ENCODE measurements at regions of chr2 and their contacts with region 1.

Region 1: GRCh38 chr2:28392297-28393113 is at the start of gene FOSL2:
- DNase-seq: peak; percentile 96
- ATAC-seq: peak; percentile 82
- H3K4me3 Mint-ChIP-seq: peak within 1 kb of the TSS; percentile 81
- H3K27ac Mint-ChIP-seq: peak within 1 kb of the TSS; percentile 96
- H3K4me1 Mint-ChIP-seq: peaks cover 24% of the 10 kb centered on the region
- H3K27me3 Mint-ChIP-seq: no peaks in the 10 kb centered on the region
- total RNA-seq, gene FOSL2: 37.3 to 40.9 TPM

Region 2: GRCh38 chr2:28108143-28108542 is 284.4 kb before region 1 on chr2:
- CTCF ChIA-PET with region 1: no interaction called
- POLR2A ChIA-PET with region 1: no interaction called
- DNase-seq: no peak
- ATAC-seq: no peak
- H3K4me3 Mint-ChIP-seq: no peak overlapping the region
- H3K27ac Mint-ChIP-seq: no peak overlapping the region
- H3K4me1 Mint-ChIP-seq: peaks cover 8% of the 10 kb centered on the region
- H3K27me3 Mint-ChIP-seq: no peaks in the 10 kb centered on the region

Region 3: GRCh38 chr2:28377984-28378678 is 14.4 kb before region 1 on chr2:
- CTCF ChIA-PET with region 1: interaction called, 16 read pairs
- POLR2A ChIA-PET with region 1: interaction called, 8 read pairs
- DNase-seq: no peak
- ATAC-seq: peak; percentile 17
- H3K4me3 Mint-ChIP-seq: no peak overlapping the region
- H3K27ac Mint-ChIP-seq: peak overlapping the region; percentile 37
- H3K4me1 Mint-ChIP-seq: peaks cover 47% of the 10 kb centered on the region
- H3K27me3 Mint-ChIP-seq: peaks cover 3% of the 10 kb centered on the region

Region 4: GRCh38 chr2:28406276-28407096 is 14.0 kb after region 1 on chr2:
- CTCF ChIA-PET with region 1: interaction called, 11 read pairs
- POLR2A ChIA-PET with region 1: interaction called, 31 read pairs
- DNase-seq: peak; percentile 82
- ATAC-seq: peak; percentile 28
- H3K4me3 Mint-ChIP-seq: peak overlapping the region; percentile 28
- H3K27ac Mint-ChIP-seq: peak overlapping the region; percentile 83
- H3K4me1 Mint-ChIP-seq: peaks cover 94% of the 10 kb centered on the region
- H3K27me3 Mint-ChIP-seq: no peaks in the 10 kb centered on the region

Measured in activated CD8-positive, alpha-beta T cell treated with anti-CD3 and anti-CD28 coated beads, Interleukin-2, amount 10 ng/mL, durations not matched to agents 7 days and 5 days (primary cell).